B cell (primary cell): ENCODE measurements at regions of chr7 and their contacts with region 1.

Region 1: GRCh38 chr7:28078036-28078901 is 102.3 kb downstream of the JAZF1 start:
- DNase-seq: peak; percentile 64
- ATAC-seq: peak; percentile 68
- H3K4me3 ChIP-seq: no peak overlapping the region
- H3K4me3 Mint-ChIP-seq: no peak overlapping the region
- H3K27ac ChIP-seq: no peak overlapping the region
- H3K27ac Mint-ChIP-seq: no peak overlapping the region
- H3K4me1 ChIP-seq: peaks cover 9 to 15% of the 10 kb centered on the region in 2 donors
- H3K4me1 Mint-ChIP-seq: peaks cover 44% of the 10 kb centered on the region
- H3K27me3 ChIP-seq: no peaks in the 10 kb centered on the region
- H3K27me3 Mint-ChIP-seq: no peaks in the 10 kb centered on the region
- CTCF ChIP-seq: peak; percentile 100

Region 2: GRCh38 chr7:28055161-28055544 is 23.1 kb before region 1 on chr7:
- CTCF ChIA-PET with region 1: interaction called, 15 read pairs
- POLR2A ChIA-PET with region 1: no interaction called
- intact Hi-C with region 1: no loop called
- DNase-seq: no peak
- ATAC-seq: no peak
- H3K4me3 ChIP-seq: no peak overlapping the region
- H3K4me3 Mint-ChIP-seq: no peak overlapping the region
- H3K27ac ChIP-seq: no peak overlapping the region
- H3K27ac Mint-ChIP-seq: no peak overlapping the region
- H3K4me1 ChIP-seq: peaks cover 5 to 13% of the 10 kb centered on the region in 2 donors
- H3K4me1 Mint-ChIP-seq: peaks cover 40% of the 10 kb centered on the region
- H3K27me3 ChIP-seq: no peaks in the 10 kb centered on the region
- H3K27me3 Mint-ChIP-seq: no peaks in the 10 kb centered on the region
- CTCF ChIP-seq: no peak

Region 3: GRCh38 chr7:28062197-28062991 is 15.9 kb before region 1 on chr7:
- CTCF ChIA-PET with region 1: interaction called, 25 read pairs
- POLR2A ChIA-PET with region 1: no interaction called
- intact Hi-C with region 1: no loop called
- DNase-seq: peak; percentile 47
- ATAC-seq: peak; percentile 62
- H3K4me3 ChIP-seq: no peak overlapping the region
- H3K4me3 Mint-ChIP-seq: no peak overlapping the region
- H3K27ac ChIP-seq: no peak overlapping the region
- H3K27ac Mint-ChIP-seq: no peak overlapping the region
- H3K4me1 ChIP-seq: peaks cover 0 to 6% of the 10 kb centered on the region in 2 donors
- H3K4me1 Mint-ChIP-seq: peaks cover 44% of the 10 kb centered on the region
- H3K27me3 ChIP-seq: no peaks in the 10 kb centered on the region
- H3K27me3 Mint-ChIP-seq: no peaks in the 10 kb centered on the region
- CTCF ChIP-seq: peak; percentile 67